Activated B cell treated with CpG ODN at 0.5 μM for 24 hours (primary cell): ENCODE measurements at regions of chr6 and their contacts with region 1.

Region 1: DNA sequence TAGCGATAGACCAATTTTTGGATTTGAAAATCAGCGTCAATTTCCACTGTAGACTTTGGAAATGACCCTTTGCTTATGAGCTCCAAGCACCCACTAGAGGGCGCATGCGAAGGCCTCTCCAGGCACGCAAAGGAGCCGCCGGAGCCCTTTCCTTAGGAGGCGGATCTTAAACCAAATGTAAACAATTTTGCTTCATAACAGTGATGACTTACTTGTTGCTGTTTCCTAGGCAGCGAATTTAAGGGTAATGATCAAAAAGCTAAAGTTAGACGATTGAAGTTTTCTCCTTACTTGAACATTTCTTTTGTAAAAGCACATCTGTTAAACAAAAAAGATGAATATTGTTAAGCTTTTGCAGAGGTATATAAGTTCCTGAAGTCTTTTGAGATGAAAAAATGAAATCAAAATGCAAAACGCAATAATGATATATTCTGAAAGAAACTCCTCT is 29.2 kb upstream of the EXOC2 start:
- DNase-seq: peak; percentile 40
- ATAC-seq: peak; percentile 50
- H3K4me3 Mint-ChIP-seq: no peak overlapping the region
- H3K27ac Mint-ChIP-seq: no peak overlapping the region
- H3K4me1 Mint-ChIP-seq: peaks cover 4% of the 10 kb centered on the region
- H3K27me3 Mint-ChIP-seq: peaks cover 12% of the 10 kb centered on the region
- CTCF ChIP-seq: peak; percentile 86

Region 2: GRCh38 chr6:865846-866245 is 143.7 kb after region 1 on chr6:
- CTCF ChIA-PET with region 1: no interaction called
- POLR2A ChIA-PET with region 1: no interaction called
- intact Hi-C with region 1: no loop called
- DNase-seq: no peak
- ATAC-seq: no peak
- H3K4me3 Mint-ChIP-seq: no peak overlapping the region
- H3K27ac Mint-ChIP-seq: no peak overlapping the region
- H3K4me1 Mint-ChIP-seq: no peaks in the 10 kb centered on the region
- H3K27me3 Mint-ChIP-seq: peaks cover 19% of the 10 kb centered on the region
- CTCF ChIP-seq: no peak

Region 3: DNA sequence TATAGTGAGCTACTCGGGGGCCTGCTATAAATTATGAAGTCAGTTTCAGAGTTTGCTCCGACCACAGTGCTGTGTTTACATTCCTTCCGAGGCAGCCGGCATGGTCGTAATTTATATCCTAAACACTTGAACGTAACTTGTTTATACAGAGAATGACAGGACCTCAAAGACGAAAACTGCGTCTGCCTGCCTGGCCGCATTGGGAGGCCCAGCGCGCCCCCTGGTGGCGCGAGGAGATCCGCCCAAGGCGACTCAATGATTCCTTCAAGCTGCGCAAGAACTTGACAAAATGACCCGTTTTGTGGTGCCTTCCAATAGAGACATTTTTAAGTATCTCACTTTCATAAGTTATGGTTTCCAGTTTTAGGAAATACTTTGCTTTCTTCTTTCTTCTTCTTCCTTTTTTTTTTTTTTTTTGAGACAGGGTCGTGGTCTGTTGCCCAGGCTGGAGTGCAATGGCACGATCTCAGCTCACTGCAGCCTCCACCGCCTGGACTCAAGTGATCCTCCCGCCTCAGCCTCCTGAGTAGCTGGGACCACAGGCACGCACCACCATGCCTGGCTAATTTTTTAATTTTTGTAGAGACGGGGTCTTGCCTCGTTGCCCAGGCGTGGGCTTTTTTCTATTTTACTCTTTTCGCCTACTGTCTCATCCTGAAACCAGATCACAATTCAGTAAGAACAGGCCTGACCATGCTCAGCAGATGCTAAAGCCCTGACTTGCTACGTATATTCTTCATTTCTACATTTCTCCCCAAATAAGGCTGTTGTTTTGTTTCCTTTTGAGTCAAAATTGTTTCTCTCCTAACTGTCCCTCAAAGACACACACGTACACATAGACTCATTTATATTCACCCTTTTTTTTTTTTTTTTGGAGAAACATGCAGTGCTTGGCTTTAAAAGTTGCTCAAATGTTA is 675.1 kb after region 1 on chr6:
- CTCF ChIA-PET with region 1: interaction called, 3 read pairs
- POLR2A ChIA-PET with region 1: no interaction called
- intact Hi-C with region 1: loop called (anchors 2 kb)
- DNase-seq: peak; percentile 67
- ATAC-seq: peak; percentile 58
- H3K4me3 Mint-ChIP-seq: no peak overlapping the region
- H3K27ac Mint-ChIP-seq: no peak overlapping the region
- H3K4me1 Mint-ChIP-seq: peaks cover 8% of the 10 kb centered on the region
- H3K27me3 Mint-ChIP-seq: peaks cover 48% of the 10 kb centered on the region
- CTCF ChIP-seq: peak; percentile 90

Region 4: DNA sequence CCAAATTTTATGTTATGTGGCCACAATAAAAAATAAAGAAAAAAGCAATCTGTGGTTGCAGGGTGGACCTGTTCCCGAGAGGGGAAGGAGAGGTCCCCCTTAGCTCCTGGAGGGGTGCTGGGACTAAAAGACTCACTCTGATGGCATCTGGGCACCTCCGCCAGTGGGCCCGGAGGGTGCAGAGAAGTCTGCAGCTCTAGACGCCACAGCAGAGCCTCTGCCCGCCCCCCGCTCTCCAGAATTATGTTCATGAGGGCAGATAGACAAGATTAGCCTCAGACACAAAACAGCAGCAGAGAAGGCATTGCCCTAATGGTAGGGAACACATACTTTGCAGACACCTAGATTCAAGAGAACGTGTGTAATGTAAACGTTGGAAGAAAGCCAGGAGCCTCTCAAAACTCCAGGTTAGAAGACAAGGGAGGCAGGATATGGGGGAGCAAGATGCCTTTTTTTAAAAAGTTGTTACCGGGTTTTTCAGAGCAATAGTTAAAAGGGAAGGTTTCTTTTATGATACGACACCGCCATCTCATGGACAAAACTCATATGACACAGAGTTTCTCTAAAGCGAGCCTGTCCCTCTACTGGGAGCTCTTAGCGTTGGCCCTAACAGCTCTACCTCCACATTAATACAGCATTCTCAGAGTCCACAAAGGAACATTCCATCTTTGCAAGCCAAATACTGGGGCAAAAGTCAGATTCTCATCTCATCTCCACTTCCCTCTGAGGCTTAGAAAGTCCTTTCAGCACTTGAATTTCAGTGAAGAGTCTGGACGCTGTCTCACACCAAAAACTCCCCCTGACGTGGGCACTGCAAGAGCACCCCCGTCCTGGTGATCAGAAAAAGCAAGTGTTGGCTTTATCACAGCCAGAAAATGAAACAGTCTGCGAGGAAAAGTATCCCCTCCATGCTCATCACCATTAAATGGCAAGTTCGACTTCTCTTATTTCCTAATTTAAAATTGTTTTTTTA is 714.5 kb after region 1 on chr6:
- CTCF ChIA-PET with region 1: no interaction called
- POLR2A ChIA-PET with region 1: no interaction called
- intact Hi-C with region 1: loop called (anchors 1 kb)
- DNase-seq: no peak
- ATAC-seq: peak; percentile 71
- H3K4me3 Mint-ChIP-seq: no peak overlapping the region
- H3K27ac Mint-ChIP-seq: no peak overlapping the region
- H3K4me1 Mint-ChIP-seq: no peaks in the 10 kb centered on the region
- H3K27me3 Mint-ChIP-seq: peaks cover 43% of the 10 kb centered on the region
- CTCF ChIP-seq: no peak